Pancreas (tissue), 10 donors: ENCODE measurements at regions of chr17 and their contacts with region 1.

Region 1: DNA sequence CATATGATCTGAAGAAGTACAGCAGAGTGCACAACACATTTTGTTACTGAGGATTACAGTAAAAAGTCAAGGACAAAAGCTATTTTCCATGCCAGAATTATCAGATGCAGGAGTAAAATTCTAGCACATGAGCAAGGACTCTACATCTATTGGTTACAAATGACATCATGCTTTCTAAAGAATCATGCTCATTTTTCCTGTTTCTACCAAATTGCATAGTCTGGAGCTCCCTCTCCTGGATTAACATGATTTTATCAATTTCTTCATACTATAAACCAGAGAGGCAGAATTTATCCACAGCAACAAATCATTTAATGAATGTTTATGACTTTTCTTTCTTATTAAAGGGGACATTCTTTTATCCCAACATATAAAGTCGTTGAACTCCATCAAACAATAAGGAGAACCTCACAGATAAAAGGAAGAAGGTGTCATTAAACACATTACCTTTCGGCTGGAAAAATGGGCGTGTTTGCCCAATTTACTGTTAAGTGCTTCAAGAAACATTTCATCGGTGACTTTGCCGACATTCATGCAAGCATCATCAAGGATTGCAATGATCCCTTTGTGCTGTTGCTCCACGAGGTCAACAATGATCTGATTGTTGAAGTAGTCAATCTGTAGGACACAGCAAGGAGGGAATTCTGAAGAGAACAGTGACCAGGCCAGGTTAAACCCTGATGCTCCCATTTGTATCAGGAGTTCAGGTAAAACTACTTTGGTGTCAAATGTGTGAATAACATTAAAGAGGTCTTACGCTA is 121.7 kb downstream of the MYO1D start:
- DNase-seq: no peak
- ATAC-seq: peak; percentile 96 to 97 (median 97)
- H3K4me3 ChIP-seq: no peak overlapping the region
- H3K27ac ChIP-seq: peak overlapping the region in 2 of 4 donors; percentile 8 to 10
- H3K4me1 ChIP-seq: peaks cover 0 to 9% (median 7%) of the 10 kb centered on the region in 3 donors
- H3K27me3 ChIP-seq: no peaks in the 10 kb centered on the region
- CTCF ChIP-seq: peak in 2 of 4 donors; percentile 28

Region 2: GRCh38 chr17:32486111-32486700 is 269.0 kb before region 1 on chr17:
- intact Hi-C with region 1: loop called in 2 of 3 experiments (anchors 5 to 10 kb)
- DNase-seq: peak; percentile 63 to 88 (median 74)
- ATAC-seq: peak; percentile 82 to 84 (median 82)
- H3K4me3 ChIP-seq: peak overlapping the region; percentile 28 to 61 (median 45)
- H3K27ac ChIP-seq: peak overlapping the region; percentile 42 to 62 (median 58)
- H3K4me1 ChIP-seq: peaks cover 0 to 10% (median 7%) of the 10 kb centered on the region in 3 donors
- H3K27me3 ChIP-seq: no peaks in the 10 kb centered on the region
- CTCF ChIP-seq: no peak

Region 3: DNA sequence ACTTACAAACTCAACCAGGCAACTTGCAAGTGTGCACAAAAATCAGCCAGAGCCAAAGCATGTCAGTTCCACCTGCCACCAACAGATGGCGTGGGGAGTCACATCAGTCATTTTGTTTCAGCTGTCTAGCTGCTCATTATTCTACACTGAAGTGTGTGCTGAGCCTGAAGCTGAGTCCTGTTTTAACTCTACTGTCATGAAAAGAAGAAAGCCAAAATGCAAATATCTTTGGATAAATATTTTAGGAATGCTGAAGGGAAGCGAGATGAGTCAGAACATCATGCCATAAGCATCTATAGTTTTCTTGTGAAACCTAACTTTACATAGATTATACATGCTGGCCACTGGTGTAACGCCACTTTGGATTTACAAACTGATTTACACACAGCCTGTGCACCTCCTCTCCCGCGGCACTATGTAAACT is 95.8 kb before region 1 on chr17:
- intact Hi-C with region 1: loop called in 1 of 3 experiments (anchors 5 kb)
- DNase-seq: peak; percentile 37 to 84 (median 70)
- ATAC-seq: peak; percentile 83 to 98 (median 96)
- H3K4me3 ChIP-seq: no peak overlapping the region
- H3K27ac ChIP-seq: no peak overlapping the region
- H3K4me1 ChIP-seq: no peaks in the 10 kb centered on the region
- H3K27me3 ChIP-seq: no peaks in the 10 kb centered on the region
- CTCF ChIP-seq: peak; percentile 81 to 91 (median 89)